ENCODE measurements at regions of chr2 and their contacts with region 1.

Region 1: DNA sequence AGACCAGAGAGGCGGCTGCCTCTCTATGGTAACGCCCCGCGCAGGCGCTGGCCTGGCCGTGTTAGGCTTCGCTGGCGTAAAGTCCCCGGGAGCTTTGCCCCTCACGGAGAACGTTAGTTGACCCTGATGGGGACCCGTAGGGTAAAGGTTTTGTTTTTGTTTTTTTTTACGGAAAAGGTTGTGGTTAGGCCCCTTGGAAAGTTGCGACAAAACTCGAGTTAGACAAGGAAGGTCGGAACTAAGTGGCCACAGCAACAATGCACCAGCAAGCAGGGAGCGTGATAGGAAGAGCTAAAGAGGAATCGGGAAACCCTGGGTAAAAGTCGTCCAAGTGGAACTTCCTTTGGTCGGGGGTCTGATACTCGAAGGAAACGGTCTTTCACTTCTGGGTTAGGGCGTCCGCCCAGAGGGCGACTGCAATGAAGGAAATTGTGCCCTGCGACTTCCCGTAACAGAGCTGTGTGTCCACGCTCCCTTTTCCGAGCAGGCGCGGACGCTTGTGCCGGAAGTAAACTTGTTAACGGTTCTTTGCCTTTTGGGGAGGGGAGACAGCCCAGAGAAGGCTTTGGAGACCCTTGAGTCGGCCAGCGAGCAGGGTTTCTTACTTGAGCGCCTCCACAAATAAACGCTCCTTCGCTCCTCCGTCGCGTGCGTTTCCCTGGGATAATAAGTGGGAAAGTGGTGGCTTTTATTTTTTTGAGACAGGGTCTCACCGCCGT is 493 bp upstream of the CLASP1 start:
- DNase-seq: peak; percentile 94
- H3K4me3 Mint-ChIP-seq: peak overlapping the region; percentile 97
- H3K27ac Mint-ChIP-seq: peak overlapping the region; percentile 100
- H3K4me1 Mint-ChIP-seq: peaks cover 56% of the 10 kb centered on the region
- H3K27me3 Mint-ChIP-seq: no peaks in the 10 kb centered on the region

Region 2: GRCh38 chr2:119678998-119679710 is 1970.6 kb before region 1 on chr2 and contains the start of gene TMEM177:
- intact Hi-C with region 1: loop called (anchors 5 kb)
- DNase-seq: peak; percentile 90
- H3K4me3 Mint-ChIP-seq: peak within 1 kb of the TSS; percentile 96
- H3K27ac Mint-ChIP-seq: peak within 1 kb of the TSS; percentile 85
- H3K4me1 Mint-ChIP-seq: peaks cover 25% of the 10 kb centered on the region
- H3K27me3 Mint-ChIP-seq: peaks cover 4% of the 10 kb centered on the region
- total RNA-seq, gene TMEM177: 16.6 and 17.4 TPM in 2 replicates

Region 3: GRCh38 chr2:121596221-121597080 is 53.3 kb before region 1 on chr2:
- intact Hi-C with region 1: loop called (anchors 1 kb)
- DNase-seq: no peak
- H3K4me3 Mint-ChIP-seq: peak overlapping the region; percentile 60
- H3K27ac Mint-ChIP-seq: peak overlapping the region; percentile 61
- H3K4me1 Mint-ChIP-seq: peaks cover 58% of the 10 kb centered on the region
- H3K27me3 Mint-ChIP-seq: no peaks in the 10 kb centered on the region

Region 4: GRCh38 chr2:121722479-121722878 is 72.7 kb after region 1 on chr2:
- intact Hi-C with region 1: loop called (anchors 1 kb)
- DNase-seq: no peak
- H3K4me3 Mint-ChIP-seq: no peak overlapping the region
- H3K27ac Mint-ChIP-seq: peak overlapping the region; percentile 84
- H3K4me1 Mint-ChIP-seq: peaks cover 15% of the 10 kb centered on the region
- H3K27me3 Mint-ChIP-seq: no peaks in the 10 kb centered on the region

Region 5: DNA sequence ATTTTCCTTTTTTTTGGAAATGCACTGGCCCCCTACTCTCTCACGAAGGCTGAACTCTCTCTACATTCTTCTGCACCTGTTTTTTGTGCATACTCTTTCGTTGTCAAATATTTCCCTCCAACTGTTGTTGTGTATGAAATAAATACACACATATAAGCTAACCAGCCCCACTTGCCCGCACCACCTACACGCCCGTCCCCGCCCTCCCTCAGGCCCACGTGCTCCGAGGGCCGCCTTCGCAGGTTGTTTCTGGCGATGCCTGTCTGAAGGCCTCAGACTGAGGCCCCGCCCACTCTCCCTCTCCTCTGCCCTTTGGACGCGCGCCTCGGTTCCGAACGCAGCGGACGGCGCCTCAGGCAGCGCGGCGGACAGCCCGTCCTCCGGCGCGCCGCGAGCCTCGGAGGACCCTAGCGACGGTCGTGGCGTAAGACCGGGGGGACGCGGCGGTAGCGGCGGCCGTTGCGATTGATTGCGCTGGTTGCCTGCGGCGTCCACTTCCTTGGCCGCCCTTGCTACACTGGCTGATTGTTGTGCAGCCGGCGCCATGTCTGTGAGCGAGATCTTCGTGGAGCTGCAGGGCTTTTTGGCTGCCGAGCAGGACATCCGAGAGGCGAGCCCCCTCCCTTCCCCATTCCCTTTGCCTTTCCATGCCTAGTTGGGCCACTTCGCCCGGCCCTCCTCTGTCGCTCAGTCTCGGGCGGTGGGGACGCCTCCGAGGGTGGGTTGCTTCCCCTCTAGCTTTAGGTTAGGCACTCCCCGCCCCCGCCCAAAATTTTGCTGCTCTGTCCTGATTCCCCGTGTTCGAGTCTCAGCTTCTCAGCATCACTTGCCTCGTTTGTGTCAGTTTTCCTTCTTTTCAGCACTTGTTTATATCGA is 105.7 kb after region 1 on chr2 and contains the start of gene TSN:
- intact Hi-C with region 1: loop called (anchors 1 kb)
- DNase-seq: peak; percentile 97
- H3K4me3 Mint-ChIP-seq: peak within 1 kb of the TSS; percentile 94
- H3K27ac Mint-ChIP-seq: peak within 1 kb of the TSS; percentile 92
- H3K4me1 Mint-ChIP-seq: peaks cover 26% of the 10 kb centered on the region
- H3K27me3 Mint-ChIP-seq: no peaks in the 10 kb centered on the region
- total RNA-seq, gene TSN: 72.3 and 80.1 TPM in 2 replicates